Transverse colon (tissue), 4 donors: ENCODE measurements at regions of chr5 and their contacts with region 1.

Region 1: DNA sequence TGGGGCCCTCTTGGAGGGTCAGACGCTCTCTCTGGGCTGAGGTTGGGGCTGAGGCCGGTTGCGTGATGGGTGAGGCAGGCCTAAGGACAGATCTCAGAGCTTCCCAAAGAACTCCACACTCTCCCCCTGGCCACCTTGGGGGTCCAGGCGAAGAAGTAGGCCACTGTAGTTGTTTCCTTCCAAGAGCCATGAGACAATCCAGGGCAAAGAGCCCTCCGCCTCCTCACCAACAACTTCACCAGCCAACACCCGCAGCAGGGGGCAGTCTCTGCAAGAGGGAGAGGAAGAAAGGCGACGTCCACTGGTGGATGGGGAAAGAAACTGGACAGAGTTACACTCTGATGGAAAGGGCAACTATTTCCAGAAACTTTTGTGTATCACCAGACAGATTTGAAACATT is 10.7 kb downstream of the SLC35A4 start:
- DNase-seq: peak; percentile 71
- H3K4me3 ChIP-seq: no peak overlapping the region
- H3K27ac ChIP-seq: peak overlapping the region in 2 of 4 donors; percentile 20 to 57
- H3K4me1 ChIP-seq: peaks cover 0 to 25% (median 6%) of the 10 kb centered on the region in 4 donors
- H3K27me3 ChIP-seq: no peaks in the 10 kb centered on the region
- CTCF ChIP-seq: peak; percentile 18 to 68 (median 52)
- EP300 ChIP-seq: no peak
- POLR2A ChIP-seq: no peak

Region 2: DNA sequence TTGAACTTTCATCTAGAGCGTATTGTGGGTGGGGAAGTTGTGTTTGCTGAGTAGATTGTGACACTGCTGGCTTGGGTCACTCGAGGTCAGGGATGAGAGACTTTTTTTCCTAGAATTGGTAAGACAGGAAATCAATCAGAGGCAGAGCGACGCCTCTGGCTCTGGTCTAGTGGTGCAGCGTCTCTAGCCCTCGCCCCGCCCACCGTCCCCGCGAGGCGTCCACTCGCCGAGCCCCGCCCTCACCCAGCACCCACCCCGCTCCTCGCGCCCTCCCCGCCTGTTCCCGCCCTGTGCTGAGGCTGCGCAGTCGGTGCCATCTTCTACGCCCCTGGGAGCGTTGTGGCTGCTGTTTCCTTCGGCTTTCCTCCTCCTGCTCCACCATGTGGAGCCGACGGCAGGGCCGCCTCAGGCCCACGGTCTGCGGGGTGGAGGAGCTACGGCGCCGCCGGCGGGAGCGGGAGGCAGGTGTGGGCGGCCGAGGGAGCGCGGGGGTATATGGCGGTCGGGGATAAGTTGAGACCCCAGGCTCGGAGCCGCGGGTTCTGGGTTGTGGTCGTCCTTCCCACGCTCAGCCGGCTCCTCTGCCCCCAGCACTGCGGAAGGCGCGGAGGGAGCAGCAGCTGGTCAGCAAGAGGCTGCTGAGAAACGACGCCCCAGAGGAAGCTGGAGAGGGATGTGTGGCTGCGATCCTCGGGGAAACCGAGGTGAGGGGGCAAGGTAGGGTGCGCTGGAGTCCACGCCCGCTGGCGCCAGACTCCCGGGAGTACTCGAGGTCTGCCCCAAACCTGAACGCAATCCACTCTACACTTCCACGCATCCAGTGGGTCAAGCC is 64.1 kb after region 1 on chr5 and contains the start of gene TMCO6:
- in situ Hi-C with region 1: loop called in 1 of 4 experiments (anchors 10 kb)
- intact Hi-C with region 1: no loop called
- DNase-seq: peak; percentile 99
- H3K4me3 ChIP-seq: peak within 1 kb of the TSS; percentile 62 to 95 (median 65)
- H3K27ac ChIP-seq: peak within 1 kb of the TSS; percentile 90 to 97 (median 92)
- H3K4me1 ChIP-seq: peaks cover 0 to 20% (median 14%) of the 10 kb centered on the region in 4 donors
- H3K27me3 ChIP-seq: no peaks in the 10 kb centered on the region
- CTCF ChIP-seq: peak; percentile 59 to 83 (median 70)
- EP300 ChIP-seq: no peak
- POLR2A ChIP-seq: peak; percentile 75
- total RNA-seq, gene TMCO6: 0.75 to 99.2 (median 40.2) TPM

Region 3: GRCh38 chr5:141585594-141585993 is 1010.3 kb after region 1 on chr5:
- in situ Hi-C with region 1: no loop called
- intact Hi-C with region 1: loop called (anchors 5 kb)
- DNase-seq: no peak
- H3K4me3 ChIP-seq: no peak overlapping the region
- H3K27ac ChIP-seq: no peak overlapping the region
- H3K4me1 ChIP-seq: no peaks in the 10 kb centered on the region
- H3K27me3 ChIP-seq: no peaks in the 10 kb centered on the region
- CTCF ChIP-seq: no peak
- EP300 ChIP-seq: no peak
- POLR2A ChIP-seq: no peak